Activated CD4-positive, alpha-beta T cell treated with anti-CD3 and anti-CD28 coated beads for 36 hours (primary cell): ENCODE measurements at regions of chr3 and their contacts with region 1.

Region 1: DNA sequence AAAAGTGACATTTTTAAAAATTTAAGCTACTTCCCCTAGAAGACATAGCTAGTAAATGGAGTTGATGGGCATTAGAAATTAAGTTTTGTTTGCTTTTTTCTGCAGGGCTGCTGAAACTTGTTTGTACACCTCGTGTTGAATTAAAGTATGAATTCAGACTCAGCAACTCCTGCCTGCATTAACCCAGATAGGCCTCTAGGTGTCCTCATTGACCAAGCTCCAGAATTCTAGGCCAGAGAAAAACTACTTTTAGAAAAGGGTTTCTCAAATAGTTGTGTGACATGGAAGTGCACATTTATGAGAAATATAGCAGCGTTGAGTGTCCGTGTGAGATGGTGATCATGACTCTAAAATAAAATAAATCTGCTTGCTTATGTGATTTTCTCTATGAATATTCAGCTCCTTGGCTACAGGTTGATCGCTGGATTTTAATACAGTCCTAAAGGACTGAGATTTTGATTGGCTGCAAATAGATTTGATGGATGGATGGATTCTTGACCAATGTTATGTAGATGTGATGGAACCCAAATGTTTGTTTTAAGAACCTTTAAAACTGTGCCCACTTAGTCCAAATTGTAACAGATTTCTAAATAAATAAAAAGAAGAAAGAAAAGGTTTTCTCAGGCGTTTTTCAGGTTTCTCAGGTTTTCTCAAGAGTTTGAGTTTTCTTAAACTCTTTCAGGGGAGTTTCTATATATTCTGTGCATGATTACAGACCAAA is 39.4 kb upstream of the LMOD3 start:
- DNase-seq: peak; percentile 38
- ATAC-seq: peak; percentile 65
- H3K4me3 Mint-ChIP-seq: no peak overlapping the region
- H3K27ac Mint-ChIP-seq: no peak overlapping the region
- H3K4me1 Mint-ChIP-seq: peaks cover 16% of the 10 kb centered on the region
- H3K27me3 Mint-ChIP-seq: no peaks in the 10 kb centered on the region

Region 2: GRCh38 chr3:68699541-68699940 is 462.2 kb before region 1 on chr3:
- CTCF ChIA-PET with region 1: no interaction called
- POLR2A ChIA-PET with region 1: no interaction called
- intact Hi-C with region 1: no loop called
- DNase-seq: no peak
- ATAC-seq: no peak
- H3K4me3 Mint-ChIP-seq: no peak overlapping the region
- H3K27ac Mint-ChIP-seq: no peak overlapping the region
- H3K4me1 Mint-ChIP-seq: no peaks in the 10 kb centered on the region
- H3K27me3 Mint-ChIP-seq: peaks cover 3% of the 10 kb centered on the region

Region 3: GRCh38 chr3:68855620-68856019 is 306.1 kb before region 1 on chr3:
- CTCF ChIA-PET with region 1: no interaction called
- POLR2A ChIA-PET with region 1: no interaction called
- intact Hi-C with region 1: no loop called
- DNase-seq: no peak
- ATAC-seq: no peak
- H3K4me3 Mint-ChIP-seq: no peak overlapping the region
- H3K27ac Mint-ChIP-seq: no peak overlapping the region
- H3K4me1 Mint-ChIP-seq: no peaks in the 10 kb centered on the region
- H3K27me3 Mint-ChIP-seq: peaks cover 14% of the 10 kb centered on the region

Region 4: DNA sequence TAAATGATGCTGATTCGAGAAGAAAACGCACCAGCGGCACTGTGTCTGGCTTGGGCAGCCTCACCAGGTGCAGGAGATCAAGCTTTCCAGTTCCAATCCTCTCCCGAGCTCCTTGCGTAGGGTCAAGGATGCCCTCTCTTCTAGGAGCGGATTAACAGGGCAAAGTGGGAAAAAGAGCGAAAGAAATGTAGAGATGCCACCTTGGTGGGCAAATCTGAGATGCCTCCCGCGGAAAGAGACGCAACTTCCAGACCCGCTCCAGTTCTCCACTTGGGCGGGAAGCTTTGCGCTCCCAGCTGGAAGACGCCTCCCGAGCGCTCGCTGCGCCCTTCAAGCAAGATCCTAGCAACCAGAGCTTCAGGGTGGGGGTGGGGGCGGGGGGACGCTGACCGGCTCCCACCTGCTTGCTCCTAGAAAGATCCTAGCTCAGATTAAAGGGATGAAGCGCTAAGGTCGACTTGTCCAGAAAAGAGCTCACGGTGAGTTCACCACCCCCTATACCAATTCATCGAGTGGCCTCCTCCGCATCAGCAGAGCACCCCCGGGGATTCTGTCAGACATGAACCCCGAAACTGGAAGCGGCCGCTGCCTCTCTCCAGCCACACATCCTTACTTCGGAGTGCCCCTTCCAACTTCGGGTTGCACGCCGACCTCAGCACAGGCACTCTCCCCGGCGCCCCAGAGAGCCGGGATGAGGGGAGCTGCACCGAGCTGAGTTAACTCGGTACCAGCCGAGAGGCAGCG is 230.2 kb before region 1 on chr3:
- CTCF ChIA-PET with region 1: no interaction called
- POLR2A ChIA-PET with region 1: no interaction called
- intact Hi-C with region 1: no loop called
- DNase-seq: no peak
- ATAC-seq: no peak
- H3K4me3 Mint-ChIP-seq: peak overlapping the region; percentile 9
- H3K27ac Mint-ChIP-seq: no peak overlapping the region
- H3K4me1 Mint-ChIP-seq: peaks cover 12% of the 10 kb centered on the region
- H3K27me3 Mint-ChIP-seq: peaks cover 68% of the 10 kb centered on the region

Region 5: DNA sequence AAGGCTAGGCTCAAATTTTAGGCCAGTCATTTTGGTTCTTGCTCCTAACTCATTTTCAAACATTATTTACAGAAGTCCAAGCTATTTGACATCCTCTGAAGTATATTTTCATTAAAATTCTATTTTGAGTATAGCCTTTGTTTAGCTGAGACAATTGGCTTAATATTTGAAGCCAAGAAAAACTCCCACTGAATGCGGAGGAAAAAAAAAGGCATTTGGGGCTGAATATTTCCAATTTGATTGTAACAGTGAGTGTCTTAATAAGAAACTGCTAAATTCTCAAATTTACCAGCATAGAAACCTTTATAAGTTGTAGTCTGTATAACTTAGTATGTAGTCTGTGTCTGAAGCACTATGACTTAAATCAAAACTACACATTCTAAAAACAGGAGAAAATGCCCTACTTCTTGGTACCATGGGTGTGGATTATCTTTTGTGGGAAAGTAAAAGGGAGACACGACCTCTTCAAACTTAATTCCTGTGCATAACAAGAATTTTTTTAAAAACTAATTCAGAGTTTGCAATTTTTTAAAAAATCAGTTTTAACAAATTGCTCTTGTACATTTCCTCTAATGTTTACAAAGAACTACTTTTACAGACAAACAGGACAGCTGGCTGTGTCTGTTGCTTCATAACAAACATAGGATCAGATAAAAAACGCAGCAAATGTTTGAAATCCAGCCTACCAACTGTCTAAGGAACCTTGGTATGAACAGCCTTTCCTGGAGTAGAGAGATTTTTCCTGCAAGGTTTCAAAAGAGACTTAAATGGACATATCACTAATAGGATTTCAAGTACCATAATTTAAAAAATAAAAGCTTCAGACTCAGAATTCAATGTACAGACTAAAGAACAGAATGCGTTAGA is 13.4 kb after region 1 on chr3:
- CTCF ChIA-PET with region 1: interaction called, 26 read pairs
- POLR2A ChIA-PET with region 1: interaction called, 3 read pairs
- intact Hi-C with region 1: no loop called
- DNase-seq: no peak
- ATAC-seq: no peak
- H3K4me3 Mint-ChIP-seq: no peak overlapping the region
- H3K27ac Mint-ChIP-seq: no peak overlapping the region
- H3K4me1 Mint-ChIP-seq: peaks cover 21% of the 10 kb centered on the region
- H3K27me3 Mint-ChIP-seq: no peaks in the 10 kb centered on the region

Region 6: DNA sequence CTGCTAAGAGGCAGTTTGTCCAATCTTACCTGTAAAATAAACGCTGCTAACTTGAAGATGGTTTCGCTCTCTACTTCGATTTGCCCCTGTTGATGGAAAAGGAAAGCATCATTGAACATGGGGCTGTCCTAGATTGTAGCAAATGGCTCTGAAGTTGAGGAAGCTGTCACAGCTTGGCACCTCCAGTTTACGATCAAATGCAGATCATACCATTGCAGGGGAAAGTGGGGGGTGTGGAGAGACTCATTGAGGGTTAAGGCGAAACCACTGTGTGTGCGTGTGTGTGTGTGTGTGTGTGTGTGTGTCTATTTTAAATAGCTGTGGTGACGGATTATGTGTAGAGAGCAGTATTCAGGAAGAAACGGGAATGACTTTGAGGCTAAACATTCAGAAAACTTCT is 88.3 kb after region 1 on chr3:
- CTCF ChIA-PET with region 1: interaction called, 13 read pairs
- POLR2A ChIA-PET with region 1: no interaction called
- intact Hi-C with region 1: no loop called
- DNase-seq: peak; percentile 38
- ATAC-seq: peak; percentile 58
- H3K4me3 Mint-ChIP-seq: no peak overlapping the region
- H3K27ac Mint-ChIP-seq: no peak overlapping the region
- H3K4me1 Mint-ChIP-seq: peaks cover 3% of the 10 kb centered on the region
- H3K27me3 Mint-ChIP-seq: no peaks in the 10 kb centered on the region

Region 7: DNA sequence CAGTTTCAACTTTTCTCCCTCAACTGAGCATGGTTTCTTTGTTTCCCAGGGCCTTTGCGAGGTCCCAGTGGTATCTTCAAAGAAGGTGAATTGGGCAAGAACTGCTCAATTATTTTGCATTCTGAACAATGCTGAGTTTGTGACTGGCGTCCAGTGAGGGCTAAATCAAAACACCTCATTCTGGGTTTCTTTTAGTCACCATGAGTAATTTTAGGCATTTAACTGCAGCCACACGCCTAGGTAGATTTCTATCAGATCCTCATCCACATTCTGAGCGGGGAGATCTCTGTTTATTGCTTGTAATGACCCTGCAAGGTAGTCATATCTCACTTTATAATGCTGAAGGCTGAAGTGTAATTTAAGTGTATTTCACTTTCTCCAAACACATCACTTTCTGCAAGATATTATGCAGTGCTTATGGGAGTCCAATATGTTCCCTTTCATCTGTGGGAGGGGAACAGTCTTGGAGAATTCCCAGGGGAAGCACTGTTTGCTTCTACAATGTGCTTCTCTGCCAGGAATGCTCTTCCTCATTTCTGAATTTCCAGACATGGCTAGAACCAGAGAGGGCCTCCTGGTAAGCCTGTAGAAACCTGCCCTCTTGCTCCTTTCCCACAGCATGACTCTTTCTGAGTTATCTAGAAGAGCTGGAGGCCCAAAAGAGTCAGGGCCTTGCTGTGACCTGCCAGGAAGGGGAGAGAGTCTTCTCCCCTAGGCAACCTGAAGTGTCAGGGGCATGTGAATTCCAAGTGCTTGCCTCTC is 132.4 kb after region 1 on chr3:
- CTCF ChIA-PET with region 1: interaction called, 13 read pairs
- POLR2A ChIA-PET with region 1: no interaction called
- intact Hi-C with region 1: no loop called
- DNase-seq: no peak
- ATAC-seq: peak; percentile 51
- H3K4me3 Mint-ChIP-seq: no peak overlapping the region
- H3K27ac Mint-ChIP-seq: no peak overlapping the region
- H3K4me1 Mint-ChIP-seq: peaks cover 8% of the 10 kb centered on the region
- H3K27me3 Mint-ChIP-seq: no peaks in the 10 kb centered on the region

Region 8: DNA sequence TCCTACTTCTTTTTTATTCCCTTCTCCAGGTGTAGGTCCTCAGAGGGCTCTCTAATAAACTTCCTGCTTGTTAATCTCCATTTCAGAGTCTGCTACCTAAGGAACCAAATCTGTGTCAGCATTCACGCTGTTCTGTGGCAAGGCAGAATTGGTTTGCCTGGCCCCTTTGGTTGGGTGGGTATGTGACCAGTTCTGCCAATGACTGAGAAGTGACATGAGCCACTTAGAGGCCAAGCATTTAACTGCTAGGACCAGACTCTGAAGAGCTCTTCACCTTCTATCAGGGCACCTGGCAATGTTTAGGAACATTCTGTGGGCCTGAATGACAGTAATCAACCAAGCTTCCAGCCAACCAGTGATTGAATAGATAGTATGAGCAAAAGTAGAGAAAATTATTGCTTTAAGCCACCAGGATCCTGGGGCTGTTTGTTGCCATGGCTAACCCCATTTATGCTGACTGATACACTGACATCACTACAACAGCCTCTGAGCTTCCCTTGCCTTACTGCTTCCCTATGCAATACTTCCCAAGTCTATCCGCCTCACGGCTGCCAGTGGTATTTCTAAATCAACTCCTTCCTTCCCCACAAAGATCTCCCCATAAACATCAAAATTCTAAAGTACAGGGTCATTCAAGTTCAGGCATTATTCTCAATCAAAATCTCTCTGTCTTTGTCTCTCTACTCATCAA is 216.5 kb after region 1 on chr3:
- CTCF ChIA-PET with region 1: interaction called, 13 read pairs
- POLR2A ChIA-PET with region 1: no interaction called
- intact Hi-C with region 1: no loop called
- DNase-seq: no peak
- ATAC-seq: no peak
- H3K4me3 Mint-ChIP-seq: no peak overlapping the region
- H3K27ac Mint-ChIP-seq: no peak overlapping the region
- H3K4me1 Mint-ChIP-seq: no peaks in the 10 kb centered on the region
- H3K27me3 Mint-ChIP-seq: peaks cover 4% of the 10 kb centered on the region

Region 9: DNA sequence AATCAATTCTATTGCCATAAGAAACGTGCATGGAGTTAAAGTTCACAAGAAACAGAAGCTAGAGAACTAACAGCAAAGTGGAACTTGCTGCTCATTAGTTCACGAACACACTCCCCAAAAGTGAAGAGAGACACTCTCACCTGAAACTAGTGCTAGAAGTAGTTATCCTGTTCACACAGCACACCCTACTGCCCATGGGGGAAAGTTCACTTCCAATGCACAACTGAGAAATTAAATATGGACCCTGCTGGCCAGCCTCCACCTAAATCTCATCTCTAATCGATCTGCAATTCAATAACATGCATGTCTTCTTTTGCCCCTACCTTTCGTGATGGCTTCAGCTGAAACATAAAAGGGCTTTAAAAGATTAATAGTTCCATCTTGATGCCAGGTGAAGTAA is 263.5 kb after region 1 on chr3:
- CTCF ChIA-PET with region 1: interaction called, 8 read pairs
- POLR2A ChIA-PET with region 1: no interaction called
- intact Hi-C with region 1: loop called (anchors 1 to 5 kb)
- DNase-seq: peak; percentile 52
- ATAC-seq: peak; percentile 74
- H3K4me3 Mint-ChIP-seq: no peak overlapping the region
- H3K27ac Mint-ChIP-seq: no peak overlapping the region
- H3K4me1 Mint-ChIP-seq: peaks cover 2% of the 10 kb centered on the region
- H3K27me3 Mint-ChIP-seq: peaks cover 5% of the 10 kb centered on the region